ENCODE measurements at regions of chr18 and their contacts with region 1.

Region 1: DNA sequence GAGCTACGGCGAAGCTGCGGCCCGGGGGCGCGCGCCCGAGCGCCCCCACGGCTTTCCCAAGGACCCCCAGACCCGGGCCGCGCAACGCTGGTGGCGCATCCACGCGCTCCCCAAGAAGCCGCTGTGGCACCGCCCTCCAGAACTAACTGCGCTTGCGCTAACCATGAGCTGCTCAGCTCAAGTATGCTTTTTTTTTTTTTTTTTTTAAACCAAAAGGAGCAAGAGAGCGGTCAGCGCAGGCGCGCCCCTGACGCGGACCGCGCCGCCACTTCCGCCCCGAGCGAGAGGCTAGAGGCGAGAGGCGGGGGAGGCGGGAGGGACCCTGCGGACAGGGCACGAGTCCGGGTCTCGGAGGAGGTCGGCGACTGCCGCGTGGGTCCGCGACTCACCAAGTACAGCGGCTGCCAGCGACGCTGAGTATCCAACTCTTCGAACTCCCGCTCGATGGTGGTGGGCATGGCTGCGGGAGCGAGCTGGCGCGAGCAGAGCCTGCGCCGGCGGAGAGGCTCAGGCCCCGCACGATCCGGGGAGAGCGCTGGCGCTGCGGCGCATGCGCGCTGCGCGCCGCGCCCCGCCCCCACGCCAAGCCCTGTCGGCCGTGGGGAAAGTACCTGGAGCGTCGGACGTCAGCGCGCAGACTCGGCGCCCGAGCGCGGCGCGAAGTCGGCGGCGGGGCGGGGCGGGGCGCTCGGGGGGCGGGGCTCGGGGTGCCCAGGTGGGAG is at the start of gene PTPN2:
- DNase-seq: peak; percentile 94 to 96 (median 95)
- H3K4me3 ChIP-seq: peak within 1 kb of the TSS; percentile 54 to 81
- H3K4me3 Mint-ChIP-seq: peak within 1 kb of the TSS; percentile 94 to 98 (median 96)
- H3K27ac ChIP-seq: peak within 1 kb of the TSS; percentile 100
- H3K27ac Mint-ChIP-seq: peak within 1 kb of the TSS; percentile 97 to 99 (median 98)
- H3K4me1 ChIP-seq: peaks cover 58% of the 10 kb centered on the region
- H3K4me1 Mint-ChIP-seq: peaks cover 50 to 63% (median 54%) of the 10 kb centered on the region in 4 donors
- H3K27me3 ChIP-seq: no peaks in the 10 kb centered on the region
- H3K27me3 Mint-ChIP-seq: no peaks in the 10 kb centered on the region
- total RNA-seq, gene PTPN2: 65.5 to 69.2 TPM

Region 2: DNA sequence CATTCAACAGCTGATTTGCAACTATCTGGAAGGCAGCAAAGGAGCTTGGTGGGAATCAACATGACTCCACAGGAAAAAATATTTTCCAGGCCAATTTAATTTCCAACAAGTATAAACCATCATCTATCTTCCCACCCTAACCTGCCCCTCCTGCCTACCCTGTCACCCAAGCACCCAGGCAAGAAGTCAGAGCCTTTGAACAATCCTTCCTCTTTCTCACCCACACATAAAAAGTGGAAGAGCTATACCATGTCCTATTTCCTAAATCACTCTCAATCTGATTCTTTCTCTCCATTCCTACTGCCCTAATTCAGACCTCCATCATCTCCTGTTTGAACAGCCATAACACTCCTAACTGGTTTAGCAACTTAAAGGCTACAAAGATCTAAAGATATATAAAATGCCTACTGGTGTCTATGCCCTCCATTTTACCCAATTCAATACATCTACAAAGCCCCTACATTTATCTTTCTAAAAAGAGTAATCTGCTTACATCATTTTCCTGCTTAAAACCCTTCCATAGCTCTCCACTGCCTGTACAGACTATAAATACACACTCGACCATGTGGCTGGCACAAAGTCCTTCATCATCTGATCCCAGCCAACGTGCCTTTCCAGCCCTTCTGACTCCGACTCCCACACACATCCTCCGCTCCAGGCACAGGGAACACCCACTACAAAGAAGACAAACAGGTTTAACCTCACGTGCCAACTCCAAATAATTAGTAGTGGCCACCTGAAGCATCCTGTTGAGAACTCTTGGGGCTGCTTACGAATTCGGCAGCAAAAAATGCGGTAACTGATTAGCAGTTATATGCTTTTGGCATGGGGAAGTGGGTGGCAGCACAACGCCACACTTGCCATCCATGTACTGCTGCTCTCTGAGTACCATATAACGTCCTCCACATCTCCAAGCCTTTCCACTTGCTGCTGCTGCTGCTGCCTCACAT is 238.3 kb before region 1 on chr18:
- CTCF ChIA-PET with region 1: no interaction called
- POLR2A ChIA-PET with region 1: no interaction called
- intact Hi-C with region 1: no loop called
- DNase-seq: no peak
- H3K4me3 ChIP-seq: no peak overlapping the region
- H3K4me3 Mint-ChIP-seq: no peak overlapping the region
- H3K27ac ChIP-seq: no peak overlapping the region
- H3K27ac Mint-ChIP-seq: no peak overlapping the region
- H3K4me1 ChIP-seq: no peaks in the 10 kb centered on the region
- H3K4me1 Mint-ChIP-seq: no peaks in the 10 kb centered on the region
- H3K27me3 ChIP-seq: no peaks in the 10 kb centered on the region
- H3K27me3 Mint-ChIP-seq: peaks cover 9 to 12% of the 10 kb centered on the region in 2 donors

Region 3: GRCh38 chr18:12692206-12692605 is 191.6 kb before region 1 on chr18:
- CTCF ChIA-PET with region 1: no interaction called
- POLR2A ChIA-PET with region 1: no interaction called
- intact Hi-C with region 1: no loop called
- DNase-seq: no peak
- H3K4me3 ChIP-seq: no peak overlapping the region
- H3K4me3 Mint-ChIP-seq: no peak overlapping the region
- H3K27ac ChIP-seq: no peak overlapping the region
- H3K27ac Mint-ChIP-seq: peak overlapping the region in 1 of 7 donors; percentile 23
- H3K4me1 ChIP-seq: no peaks in the 10 kb centered on the region
- H3K4me1 Mint-ChIP-seq: peaks cover 0 to 8% (median 2%) of the 10 kb centered on the region in 4 donors
- H3K27me3 ChIP-seq: no peaks in the 10 kb centered on the region
- H3K27me3 Mint-ChIP-seq: no peaks in the 10 kb centered on the region

Region 4: GRCh38 chr18:12702221-12703095 is 181.4 kb before region 1 on chr18 and contains the starts of genes CEP76 and PSMG2:
- CTCF ChIA-PET with region 1: interaction called, 4 read pairs
- POLR2A ChIA-PET with region 1: interaction called, 13 read pairs
- intact Hi-C with region 1: loop called (anchors 1 kb)
- DNase-seq: peak; percentile 84 to 90 (median 87)
- H3K4me3 ChIP-seq: peak within 1 kb of the TSS; percentile 82 to 99
- H3K4me3 Mint-ChIP-seq: peak within 1 kb of the TSS; percentile 87 to 100 (median 98)
- H3K27ac ChIP-seq: peak within 1 kb of the TSS; percentile 93
- H3K27ac Mint-ChIP-seq: peak within 1 kb of the TSS; percentile 89 to 100 (median 96)
- H3K4me1 ChIP-seq: peaks cover 46% of the 10 kb centered on the region
- H3K4me1 Mint-ChIP-seq: peaks cover 32 to 60% (median 48%) of the 10 kb centered on the region in 4 donors
- H3K27me3 ChIP-seq: no peaks in the 10 kb centered on the region
- H3K27me3 Mint-ChIP-seq: no peaks in the 10 kb centered on the region
- total RNA-seq, gene CEP76: 9.9 to 13.1 TPM
- total RNA-seq, gene PSMG2: 59.7 to 62.0 TPM

Region 5: GRCh38 chr18:12838178-12838634 is 45.6 kb before region 1 on chr18:
- CTCF ChIA-PET with region 1: interaction called, 3 read pairs
- POLR2A ChIA-PET with region 1: interaction called, 22 read pairs
- intact Hi-C with region 1: loop called (anchors 2 kb)
- DNase-seq: peak in 1 of 5 donors; percentile 7
- H3K4me3 ChIP-seq: no peak overlapping the region
- H3K4me3 Mint-ChIP-seq: peak overlapping the region; percentile 36 to 83 (median 78)
- H3K27ac ChIP-seq: peak overlapping the region; percentile 51
- H3K27ac Mint-ChIP-seq: peak overlapping the region; percentile 81 to 94 (median 87)
- H3K4me1 ChIP-seq: peaks cover 57% of the 10 kb centered on the region
- H3K4me1 Mint-ChIP-seq: peaks cover 43 to 66% (median 55%) of the 10 kb centered on the region in 4 donors
- H3K27me3 ChIP-seq: no peaks in the 10 kb centered on the region
- H3K27me3 Mint-ChIP-seq: no peaks in the 10 kb centered on the region

Region 6: GRCh38 chr18:12862467-12862866 is 21.4 kb before region 1 on chr18:
- CTCF ChIA-PET with region 1: interaction called, 5 read pairs
- POLR2A ChIA-PET with region 1: interaction called, 16 read pairs
- intact Hi-C with region 1: no loop called
- DNase-seq: no peak
- H3K4me3 ChIP-seq: no peak overlapping the region
- H3K4me3 Mint-ChIP-seq: peak overlapping the region in 1 of 8 donors; percentile 39
- H3K27ac ChIP-seq: no peak overlapping the region
- H3K27ac Mint-ChIP-seq: peak overlapping the region in 5 of 7 donors; percentile 19 to 86 (median 75)
- H3K4me1 ChIP-seq: peaks cover 54% of the 10 kb centered on the region
- H3K4me1 Mint-ChIP-seq: peaks cover 36 to 68% (median 53%) of the 10 kb centered on the region in 4 donors
- H3K27me3 ChIP-seq: no peaks in the 10 kb centered on the region
- H3K27me3 Mint-ChIP-seq: no peaks in the 10 kb centered on the region

Region 7: GRCh38 chr18:12947355-12948041 is 63.7 kb after region 1 on chr18 and contains the start of gene SEH1L:
- CTCF ChIA-PET with region 1: interaction called, 3 read pairs
- POLR2A ChIA-PET with region 1: interaction called, 31 read pairs
- intact Hi-C with region 1: loop called (anchors 1 kb)
- DNase-seq: peak; percentile 97 to 98 (median 98)
- H3K4me3 ChIP-seq: peak within 1 kb of the TSS; percentile 79 to 89
- H3K4me3 Mint-ChIP-seq: peak within 1 kb of the TSS; percentile 92 to 98 (median 96)
- H3K27ac ChIP-seq: peak within 1 kb of the TSS; percentile 90
- H3K27ac Mint-ChIP-seq: peak within 1 kb of the TSS; percentile 86 to 99 (median 98)
- H3K4me1 ChIP-seq: peaks cover 36% of the 10 kb centered on the region
- H3K4me1 Mint-ChIP-seq: peaks cover 20 to 40% (median 31%) of the 10 kb centered on the region in 4 donors
- H3K27me3 ChIP-seq: no peaks in the 10 kb centered on the region
- H3K27me3 Mint-ChIP-seq: no peaks in the 10 kb centered on the region
- total RNA-seq, gene SEH1L: 28.9 to 31.3 TPM

Region 8: DNA sequence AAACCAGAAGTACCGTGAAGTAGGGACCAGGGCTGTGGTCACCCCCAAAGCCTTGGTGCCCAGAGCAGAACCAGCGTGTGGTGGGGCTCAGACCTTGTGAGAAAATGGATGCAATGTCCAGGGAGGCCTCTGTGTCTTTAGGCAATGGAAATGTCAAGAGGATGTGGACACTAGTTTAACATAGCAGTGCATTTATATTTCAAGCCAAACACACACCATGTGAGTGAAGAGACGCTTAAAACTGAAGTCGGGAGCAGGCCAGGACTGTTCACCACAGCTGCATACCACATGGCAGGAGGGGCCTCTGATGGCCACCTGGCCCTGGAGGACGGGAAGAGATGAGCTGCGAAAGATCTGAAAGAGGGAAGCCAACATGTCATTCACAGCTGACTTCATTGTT is 247.4 kb after region 1 on chr18:
- CTCF ChIA-PET with region 1: no interaction called
- POLR2A ChIA-PET with region 1: no interaction called
- intact Hi-C with region 1: no loop called
- DNase-seq: no peak
- H3K4me3 ChIP-seq: no peak overlapping the region
- H3K4me3 Mint-ChIP-seq: no peak overlapping the region
- H3K27ac ChIP-seq: no peak overlapping the region
- H3K27ac Mint-ChIP-seq: peak overlapping the region in 3 of 7 donors; percentile 17 to 82 (median 77)
- H3K4me1 ChIP-seq: peaks cover 7% of the 10 kb centered on the region
- H3K4me1 Mint-ChIP-seq: peaks cover 10 to 17% (median 14%) of the 10 kb centered on the region in 4 donors
- H3K27me3 ChIP-seq: no peaks in the 10 kb centered on the region
- H3K27me3 Mint-ChIP-seq: no peaks in the 10 kb centered on the region

Region 9: DNA sequence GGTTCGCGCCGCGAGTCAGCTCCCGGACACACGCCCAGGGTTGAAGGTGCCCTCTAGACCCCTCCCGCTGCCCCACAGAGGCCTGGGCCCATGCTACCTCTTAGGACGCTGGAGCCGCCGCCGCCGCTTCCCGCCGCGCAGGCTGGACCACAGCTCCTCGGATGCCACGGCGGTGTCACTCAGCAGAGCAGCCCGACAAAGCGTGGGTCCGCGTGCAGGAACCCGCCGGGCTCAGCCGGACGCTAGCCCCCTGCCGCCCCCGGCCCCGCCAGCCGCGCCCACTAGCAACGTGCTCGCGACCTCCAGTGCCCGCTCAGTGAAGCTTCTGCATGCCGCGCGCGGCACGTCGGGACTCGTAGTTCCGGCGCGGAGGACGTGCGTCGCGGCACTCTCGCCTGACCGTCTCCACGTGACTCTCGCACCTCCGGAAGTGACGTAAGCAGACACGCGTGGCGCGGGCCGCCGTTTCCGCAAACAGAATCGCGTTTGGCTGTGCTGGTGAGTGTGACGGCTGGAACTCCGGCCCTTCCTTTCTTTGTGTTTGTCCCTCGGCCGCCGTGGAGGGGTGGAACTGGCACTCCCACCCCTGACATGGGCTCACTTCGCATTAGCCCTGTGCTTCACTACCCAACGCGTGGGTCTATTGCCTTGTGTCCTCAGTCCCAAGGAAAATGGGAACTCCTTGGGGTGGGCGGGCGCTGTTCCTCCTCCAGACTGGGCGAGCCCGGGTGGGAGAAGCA is 842.6 kb after region 1 on chr18 and contains the starts of genes FAM210A and RNMT:
- CTCF ChIA-PET with region 1: no interaction called
- POLR2A ChIA-PET with region 1: interaction called, 3 read pairs
- intact Hi-C with region 1: loop called (anchors 2 kb)
- DNase-seq: peak; percentile 90 to 95 (median 92)
- H3K4me3 ChIP-seq: peak within 1 kb of the TSS; percentile 76 to 78
- H3K4me3 Mint-ChIP-seq: peak within 1 kb of the TSS; percentile 87 to 97 (median 92)
- H3K27ac ChIP-seq: peak within 1 kb of the TSS; percentile 96
- H3K27ac Mint-ChIP-seq: peak within 1 kb of the TSS; percentile 85 to 98 (median 97)
- H3K4me1 ChIP-seq: peaks cover 49% of the 10 kb centered on the region
- H3K4me1 Mint-ChIP-seq: peaks cover 41 to 67% (median 51%) of the 10 kb centered on the region in 4 donors
- H3K27me3 ChIP-seq: no peaks in the 10 kb centered on the region
- H3K27me3 Mint-ChIP-seq: no peaks in the 10 kb centered on the region
- total RNA-seq, gene FAM210A: 9.4 to 10.2 TPM
- total RNA-seq, gene RNMT: 53.7 to 55.0 TPM